Caco-2 (cell line): ENCODE measurements at regions of chr6 and their contacts with region 1.

Region 1: GRCh38 chr6:83067448-83068413 is at the start of gene DOP1A:
- DNase-seq: peak; percentile 95
- H3K4me3 ChIP-seq: peak within 1 kb of the TSS; percentile 96
- H3K4me3 Mint-ChIP-seq: peak within 1 kb of the TSS; percentile 87
- H3K27ac Mint-ChIP-seq: peak within 1 kb of the TSS; percentile 85
- H3K4me1 ChIP-seq: peaks cover 5% of the 10 kb centered on the region; the same call in 1 of the 2 replicates
- H3K4me1 Mint-ChIP-seq: peaks cover 5% of the 10 kb centered on the region
- H3K27me3 ChIP-seq: no peaks in the 10 kb centered on the region
- H3K27me3 Mint-ChIP-seq: no peaks in the 10 kb centered on the region
- CTCF ChIP-seq: peak; percentile 82 to 95
- total RNA-seq, gene DOP1A: 14.6 and 16.1 TPM in 2 replicates

Region 2: DNA sequence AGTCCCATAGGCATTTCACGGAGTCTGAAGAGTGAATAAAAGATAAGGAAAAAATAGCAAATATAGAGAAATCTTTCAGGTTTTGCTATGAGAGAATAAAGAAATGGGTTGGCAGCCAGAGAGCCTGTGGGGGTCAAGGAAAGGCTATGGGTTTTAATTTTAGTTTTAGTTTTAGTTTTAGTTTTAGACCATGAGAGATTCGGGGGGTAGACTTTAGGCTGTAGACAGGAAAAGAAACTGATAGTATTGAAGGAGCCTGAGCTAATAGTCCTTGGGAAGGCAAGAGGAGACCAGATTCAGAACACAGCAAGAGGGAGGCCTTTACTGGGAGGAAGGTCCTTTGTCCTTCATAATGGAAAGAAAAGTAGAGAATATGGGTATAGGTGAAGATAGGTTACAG is 19.0 kb after region 1 on chr6:
- CTCF ChIA-PET with region 1: no interaction called
- POLR2A ChIA-PET with region 1: no interaction called
- intact Hi-C with region 1: no loop called
- DNase-seq: no peak
- H3K4me3 ChIP-seq: no peak overlapping the region
- H3K4me3 Mint-ChIP-seq: no peak overlapping the region
- H3K27ac Mint-ChIP-seq: no peak overlapping the region
- H3K4me1 ChIP-seq: no peaks in the 10 kb centered on the region
- H3K4me1 Mint-ChIP-seq: no peaks in the 10 kb centered on the region
- H3K27me3 ChIP-seq: no peaks in the 10 kb centered on the region
- H3K27me3 Mint-ChIP-seq: no peaks in the 10 kb centered on the region
- CTCF ChIP-seq: no peak

Region 3: DNA sequence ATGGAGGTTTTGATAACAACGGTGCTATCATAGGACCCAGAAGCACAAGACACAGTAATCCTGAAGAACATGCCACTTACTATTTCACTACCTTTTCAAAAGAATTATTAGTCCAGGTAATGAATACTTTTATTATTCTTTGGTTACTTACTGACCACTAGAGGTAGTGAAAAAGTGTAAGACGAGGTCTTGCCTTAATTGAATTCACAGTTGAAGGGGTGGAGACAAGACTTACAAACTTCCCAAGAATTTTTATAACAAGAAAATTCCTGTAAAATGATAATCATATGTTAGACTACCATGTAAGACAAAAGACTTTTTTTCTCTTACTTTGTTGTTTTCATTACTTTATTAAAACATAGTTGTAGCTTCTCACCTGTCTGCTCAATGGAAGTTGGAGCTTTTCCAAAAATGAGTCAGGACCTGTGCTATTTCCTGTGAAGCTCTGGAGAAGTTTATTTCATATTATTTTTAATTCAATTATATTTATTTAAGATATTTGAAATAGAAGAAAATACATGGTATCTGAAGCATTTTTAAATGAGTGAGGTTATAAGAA is 52.1 kb after region 1 on chr6:
- CTCF ChIA-PET with region 1: no interaction called
- POLR2A ChIA-PET with region 1: no interaction called
- intact Hi-C with region 1: loop called (anchors 5 kb)
- DNase-seq: no peak
- H3K4me3 ChIP-seq: no peak overlapping the region
- H3K4me3 Mint-ChIP-seq: no peak overlapping the region
- H3K27ac Mint-ChIP-seq: no peak overlapping the region
- H3K4me1 ChIP-seq: no peaks in the 10 kb centered on the region
- H3K4me1 Mint-ChIP-seq: no peaks in the 10 kb centered on the region
- H3K27me3 ChIP-seq: no peaks in the 10 kb centered on the region
- H3K27me3 Mint-ChIP-seq: no peaks in the 10 kb centered on the region
- CTCF ChIP-seq: no peak

Region 4: DNA sequence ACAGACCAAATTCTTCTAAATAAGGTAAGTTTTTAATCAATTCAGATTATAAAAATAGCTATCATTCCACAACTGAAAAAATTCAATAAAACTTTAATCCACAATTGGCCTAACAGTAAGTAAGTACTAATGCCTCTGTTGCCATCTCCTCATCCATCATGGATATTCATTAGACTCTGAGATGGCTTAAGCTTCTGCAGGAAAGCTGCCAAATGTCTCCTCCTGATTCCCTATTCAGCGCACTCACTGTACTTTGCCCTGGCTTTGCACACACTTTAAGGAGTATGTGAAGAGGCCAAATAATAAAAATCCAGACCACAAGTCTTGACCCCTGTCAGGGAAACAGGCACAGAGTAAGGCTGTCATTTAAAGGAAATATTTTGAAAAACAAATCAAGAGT is 101.8 kb after region 1 on chr6:
- CTCF ChIA-PET with region 1: interaction called, 3 read pairs
- POLR2A ChIA-PET with region 1: no interaction called
- intact Hi-C with region 1: loop called (anchors 5 kb)
- DNase-seq: no peak
- H3K4me3 ChIP-seq: no peak overlapping the region
- H3K4me3 Mint-ChIP-seq: no peak overlapping the region
- H3K27ac Mint-ChIP-seq: no peak overlapping the region
- H3K4me1 ChIP-seq: no peaks in the 10 kb centered on the region
- H3K4me1 Mint-ChIP-seq: no peaks in the 10 kb centered on the region
- H3K27me3 ChIP-seq: no peaks in the 10 kb centered on the region
- H3K27me3 Mint-ChIP-seq: no peaks in the 10 kb centered on the region
- CTCF ChIP-seq: no peak

Region 5: GRCh38 chr6:83215131-83216047 is 147.7 kb after region 1 on chr6:
- CTCF ChIA-PET with region 1: interaction called, 15 read pairs
- POLR2A ChIA-PET with region 1: interaction called, 9 read pairs
- intact Hi-C with region 1: loop called (anchors 1 kb)
- DNase-seq: peak; percentile 52 to 63
- H3K4me3 ChIP-seq: no peak overlapping the region
- H3K4me3 Mint-ChIP-seq: no peak overlapping the region
- H3K27ac Mint-ChIP-seq: no peak overlapping the region
- H3K4me1 ChIP-seq: no peaks in the 10 kb centered on the region; the same call in 1 of the 2 replicates
- H3K4me1 Mint-ChIP-seq: peaks cover 6% of the 10 kb centered on the region
- H3K27me3 ChIP-seq: no peaks in the 10 kb centered on the region
- H3K27me3 Mint-ChIP-seq: no peaks in the 10 kb centered on the region
- CTCF ChIP-seq: peak; percentile 46 to 89

Region 6: DNA sequence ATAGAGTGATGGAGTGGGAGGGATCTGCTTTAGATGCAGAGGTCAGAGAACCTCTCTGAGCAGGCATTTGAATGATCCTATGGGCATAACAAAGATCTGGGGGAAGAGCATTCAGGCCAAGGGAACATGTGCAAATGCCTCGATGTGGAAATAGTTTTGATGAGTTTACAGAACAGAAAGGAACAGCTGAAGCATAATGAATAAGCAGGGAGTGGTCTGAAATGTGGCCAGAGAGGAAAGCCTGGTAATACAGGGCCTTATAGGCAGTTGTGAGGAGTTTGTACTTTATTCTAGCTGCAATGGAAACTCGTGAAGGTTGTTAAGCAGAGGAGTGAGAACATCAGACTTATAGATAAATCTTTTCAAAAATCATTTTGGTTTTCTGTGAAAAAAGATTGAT is 396.2 kb after region 1 on chr6:
- CTCF ChIA-PET with region 1: no interaction called
- POLR2A ChIA-PET with region 1: no interaction called
- intact Hi-C with region 1: loop called (anchors 2 kb)
- DNase-seq: peak in 1 of 2 experiments; percentile 16
- H3K4me3 ChIP-seq: no peak overlapping the region
- H3K4me3 Mint-ChIP-seq: peak overlapping the region; percentile 20
- H3K27ac Mint-ChIP-seq: peak overlapping the region; percentile 89
- H3K4me1 ChIP-seq: peaks cover 53% of the 10 kb centered on the region
- H3K4me1 Mint-ChIP-seq: peaks cover 48% of the 10 kb centered on the region
- H3K27me3 ChIP-seq: no peaks in the 10 kb centered on the region
- H3K27me3 Mint-ChIP-seq: no peaks in the 10 kb centered on the region
- CTCF ChIP-seq: no peak

Region 7: GRCh38 chr6:83536034-83536646 is 468.4 kb after region 1 on chr6:
- CTCF ChIA-PET with region 1: interaction called, 9 read pairs
- POLR2A ChIA-PET with region 1: no interaction called
- intact Hi-C with region 1: loop called (anchors 5 kb)
- DNase-seq: peak; percentile 59 to 75
- H3K4me3 ChIP-seq: no peak overlapping the region
- H3K4me3 Mint-ChIP-seq: no peak overlapping the region
- H3K27ac Mint-ChIP-seq: no peak overlapping the region
- H3K4me1 ChIP-seq: peaks cover 6% of the 10 kb centered on the region
- H3K4me1 Mint-ChIP-seq: peaks cover 16% of the 10 kb centered on the region
- H3K27me3 ChIP-seq: no peaks in the 10 kb centered on the region
- H3K27me3 Mint-ChIP-seq: peaks cover 6% of the 10 kb centered on the region
- CTCF ChIP-seq: peak; percentile 74 to 82